Natural killer cell (primary cell): ENCODE measurements at regions of chr14 and their contacts with region 1.

Region 1: DNA sequence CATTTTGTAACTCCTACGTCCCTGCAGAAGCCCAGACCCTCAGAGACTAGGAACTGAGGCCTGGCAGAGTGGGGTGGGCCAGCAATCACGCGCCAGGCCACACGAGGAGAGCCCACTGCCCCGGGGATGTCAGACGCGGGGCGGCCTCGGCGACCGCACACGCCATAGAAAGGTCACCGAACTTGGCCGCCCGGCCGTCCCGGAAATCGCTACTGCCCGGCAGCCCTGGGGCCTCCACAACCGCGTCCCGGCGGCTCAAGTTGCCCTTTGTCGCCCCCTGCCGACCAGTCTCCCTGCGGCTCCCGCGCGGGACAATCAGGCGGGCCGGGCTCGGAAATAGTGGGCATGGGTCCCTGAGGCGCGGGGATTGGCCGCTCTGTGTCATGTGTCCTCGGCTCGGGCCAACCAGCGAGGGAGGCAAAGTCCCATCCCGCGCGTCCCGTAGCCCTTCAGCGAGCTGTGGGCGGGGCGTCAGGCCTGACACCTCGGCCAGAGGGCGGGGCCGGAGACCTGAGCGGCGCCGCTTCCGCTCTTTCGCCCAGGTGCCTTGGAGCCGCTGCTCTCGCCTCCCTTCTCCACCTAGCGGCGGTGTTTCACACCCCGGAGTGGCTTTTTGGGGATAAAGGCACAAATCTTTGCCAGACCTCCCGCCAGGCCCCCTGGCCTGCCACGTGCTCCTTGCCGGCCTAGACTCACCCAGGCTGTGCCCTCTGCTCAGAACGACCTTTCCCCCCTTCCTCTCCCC is 33.4 kb upstream of the DEGS2 start:
- DNase-seq: peak; percentile 99 to 100
- ATAC-seq: peak; percentile 97 to 99 (median 98)
- H3K4me3 ChIP-seq: peak overlapping the region; percentile 40
- H3K4me3 Mint-ChIP-seq: peak overlapping the region; percentile 76
- H3K27ac ChIP-seq: peak overlapping the region; percentile 91
- H3K27ac Mint-ChIP-seq: peak overlapping the region; percentile 84 to 93
- H3K4me1 ChIP-seq: peaks cover 18% of the 10 kb centered on the region
- H3K4me1 Mint-ChIP-seq: peaks cover 7 to 9% of the 10 kb centered on the region in 2 donors
- H3K27me3 ChIP-seq: no peaks in the 10 kb centered on the region
- H3K27me3 Mint-ChIP-seq: no peaks in the 10 kb centered on the region
- CTCF ChIP-seq: peak; percentile 80

Region 2: GRCh38 chr14:99683619-99684355 is 509.1 kb before region 1 on chr14 and contains the start of gene CYP46A1:
- intact Hi-C with region 1: loop called (anchors 5 kb)
- DNase-seq: peak; percentile 99 to 100
- ATAC-seq: peak; percentile 93 to 99 (median 93)
- H3K4me3 ChIP-seq: peak within 1 kb of the TSS; percentile 91
- H3K4me3 Mint-ChIP-seq: peak within 1 kb of the TSS; percentile 93
- H3K27ac ChIP-seq: peak within 1 kb of the TSS; percentile 85
- H3K27ac Mint-ChIP-seq: peak within 1 kb of the TSS; percentile 82 to 91
- H3K4me1 ChIP-seq: peaks cover 16% of the 10 kb centered on the region
- H3K4me1 Mint-ChIP-seq: peaks cover 7 to 27% of the 10 kb centered on the region in 2 donors
- H3K27me3 ChIP-seq: peaks cover 7% of the 10 kb centered on the region
- H3K27me3 Mint-ChIP-seq: peaks cover 29 to 32% of the 10 kb centered on the region in 2 donors
- CTCF ChIP-seq: no peak
- total RNA-seq, gene CYP46A1: 0.09 to 0.45 (median 0.09) TPM

Region 3: DNA sequence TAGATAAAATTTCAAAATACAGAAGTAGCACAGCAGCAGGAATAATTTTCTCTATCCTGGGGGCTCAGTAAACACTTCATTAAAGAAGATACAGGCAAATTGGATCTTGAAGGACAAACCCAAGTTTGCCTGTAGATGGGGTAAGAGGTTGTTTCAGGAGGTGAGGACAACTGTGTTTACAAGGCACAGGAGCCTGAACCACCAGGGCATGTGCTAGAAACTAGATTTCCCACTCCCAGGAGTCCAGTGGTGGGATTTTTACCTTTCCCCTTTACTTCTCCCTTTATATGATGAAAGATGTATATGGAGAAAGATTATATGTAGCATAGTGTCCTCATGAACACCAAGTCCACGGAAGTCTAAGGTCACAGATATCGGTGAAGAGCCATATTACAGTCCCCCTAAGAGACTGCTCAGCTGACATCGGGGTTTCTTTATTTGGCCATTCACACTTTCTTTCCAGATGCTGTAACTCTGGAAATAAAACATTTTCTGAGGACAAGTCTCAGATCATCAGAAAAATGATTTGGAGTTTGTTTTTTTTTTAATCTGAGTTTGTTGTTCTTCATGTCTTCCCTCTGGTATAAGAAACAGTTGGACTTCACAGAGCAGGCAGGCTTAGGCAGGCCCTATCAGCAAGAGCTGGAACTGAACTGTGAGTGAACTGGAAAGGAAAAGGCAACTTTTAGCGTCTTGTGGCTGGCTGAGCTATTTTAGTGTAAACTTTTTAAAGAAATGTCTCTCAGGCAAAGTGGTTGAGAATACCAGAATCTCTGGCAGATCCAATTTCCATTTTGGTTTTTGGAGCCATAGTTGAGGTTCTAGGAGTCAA is 135.7 kb before region 1 on chr14:
- intact Hi-C with region 1: loop called (anchors 2 kb)
- DNase-seq: peak in 1 of 2 donors; percentile 83
- ATAC-seq: peak; percentile 75 to 91 (median 88)
- H3K4me3 ChIP-seq: no peak overlapping the region
- H3K4me3 Mint-ChIP-seq: no peak overlapping the region
- H3K27ac ChIP-seq: no peak overlapping the region
- H3K27ac Mint-ChIP-seq: peak overlapping the region; percentile 84 to 93
- H3K4me1 ChIP-seq: peaks cover 38% of the 10 kb centered on the region
- H3K4me1 Mint-ChIP-seq: peaks cover 54 to 60% of the 10 kb centered on the region in 2 donors
- H3K27me3 ChIP-seq: no peaks in the 10 kb centered on the region
- H3K27me3 Mint-ChIP-seq: no peaks in the 10 kb centered on the region
- CTCF ChIP-seq: peak; percentile 74

Region 4: GRCh38 chr14:100122481-100123222 is 70.2 kb before region 1 on chr14:
- intact Hi-C with region 1: no loop called
- DNase-seq: no peak
- ATAC-seq: no peak
- H3K4me3 ChIP-seq: no peak overlapping the region
- H3K4me3 Mint-ChIP-seq: no peak overlapping the region
- H3K27ac ChIP-seq: no peak overlapping the region
- H3K27ac Mint-ChIP-seq: peak overlapping the region in 1 of 2 donors; percentile 33
- H3K4me1 ChIP-seq: peaks cover 14% of the 10 kb centered on the region
- H3K4me1 Mint-ChIP-seq: peaks cover 28 to 30% of the 10 kb centered on the region in 2 donors
- H3K27me3 ChIP-seq: no peaks in the 10 kb centered on the region
- H3K27me3 Mint-ChIP-seq: no peaks in the 10 kb centered on the region
- CTCF ChIP-seq: no peak

Region 5: GRCh38 chr14:100147181-100147631 is 45.6 kb before region 1 on chr14:
- intact Hi-C with region 1: loop called (anchors 1 kb)
- DNase-seq: peak; percentile 64 to 83
- ATAC-seq: peak; percentile 80 to 92 (median 82)
- H3K4me3 ChIP-seq: no peak overlapping the region
- H3K4me3 Mint-ChIP-seq: peak overlapping the region; percentile 68
- H3K27ac ChIP-seq: peak overlapping the region; percentile 46
- H3K27ac Mint-ChIP-seq: peak overlapping the region; percentile 65 to 77
- H3K4me1 ChIP-seq: peaks cover 30% of the 10 kb centered on the region
- H3K4me1 Mint-ChIP-seq: peaks cover 5 to 39% of the 10 kb centered on the region in 2 donors
- H3K27me3 ChIP-seq: no peaks in the 10 kb centered on the region
- H3K27me3 Mint-ChIP-seq: no peaks in the 10 kb centered on the region
- CTCF ChIP-seq: no peak

Region 6: GRCh38 chr14:100239840-100240724 is 47.2 kb after region 1 on chr14:
- intact Hi-C with region 1: loop called (anchors 1 kb)
- DNase-seq: peak; percentile 80 to 92
- ATAC-seq: peak; percentile 37 to 63 (median 48)
- H3K4me3 ChIP-seq: peak overlapping the region; percentile 84
- H3K4me3 Mint-ChIP-seq: peak overlapping the region; percentile 93
- H3K27ac ChIP-seq: peak overlapping the region; percentile 90
- H3K27ac Mint-ChIP-seq: peak overlapping the region; percentile 94 to 97
- H3K4me1 ChIP-seq: peaks cover 31% of the 10 kb centered on the region
- H3K4me1 Mint-ChIP-seq: peaks cover 38 to 61% of the 10 kb centered on the region in 2 donors
- H3K27me3 ChIP-seq: no peaks in the 10 kb centered on the region
- H3K27me3 Mint-ChIP-seq: no peaks in the 10 kb centered on the region
- CTCF ChIP-seq: peak; percentile 66